ENCODE measurements at regions of chr11 and their contacts with region 1.

Region 1: GRCh38 chr11:102244681-102245409 is 72.4 kb upstream of the BIRC3 start:
- DNase-seq: no peak
- ATAC-seq: no peak
- H3K4me3 ChIP-seq: no peak overlapping the region
- H3K27ac ChIP-seq: no peak overlapping the region
- H3K4me1 ChIP-seq: no peaks in the 10 kb centered on the region
- H3K27me3 ChIP-seq: no peaks in the 10 kb centered on the region
- CTCF ChIP-seq: no peak

Region 2: DNA sequence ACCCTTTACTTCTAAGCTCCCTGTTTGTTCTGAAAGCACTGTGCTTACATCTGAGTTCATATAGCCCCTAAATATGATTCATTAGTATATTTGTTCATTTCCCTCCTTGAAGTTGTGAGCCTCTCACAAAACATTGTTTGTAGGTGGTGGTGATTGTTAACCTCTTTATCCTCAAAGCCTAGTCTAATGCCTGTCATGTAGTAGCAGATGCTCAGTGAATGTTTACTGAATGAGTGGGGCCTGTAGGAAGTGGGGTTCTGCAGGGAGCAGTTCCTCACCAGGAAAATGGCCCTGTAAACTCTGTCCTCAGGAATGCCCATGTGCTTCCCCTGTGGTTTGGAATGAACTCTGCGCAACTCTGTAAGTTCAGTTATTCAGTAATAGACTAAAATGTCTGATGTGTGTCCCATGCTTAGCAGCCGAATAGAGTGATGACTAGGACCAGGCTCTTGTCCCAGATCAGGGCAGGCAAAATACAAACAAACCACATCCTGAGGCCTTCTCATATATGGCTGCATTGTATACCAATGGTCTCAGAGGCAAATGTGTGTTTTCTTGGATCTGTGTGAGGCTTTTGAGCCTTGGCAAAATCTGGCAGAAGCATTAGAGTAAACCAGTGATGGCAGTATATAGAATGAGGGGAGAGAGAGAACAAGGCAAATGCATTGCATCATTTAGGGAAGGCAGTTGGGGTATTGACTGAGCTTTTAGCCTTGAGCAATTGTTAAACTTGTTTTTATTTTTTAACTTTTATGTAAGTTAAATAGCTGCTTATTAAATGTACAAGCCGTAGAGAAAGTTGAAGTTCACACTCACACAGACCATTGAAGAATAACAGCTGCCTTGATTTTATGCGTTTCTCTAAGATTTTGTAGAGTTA is 18.9 kb before region 1 on chr11:
- intact Hi-C with region 1: loop called in 1 of 2 experiments (anchors 1 kb)
- DNase-seq: no peak
- ATAC-seq: no peak
- H3K4me3 ChIP-seq: no peak overlapping the region
- H3K27ac ChIP-seq: no peak overlapping the region
- H3K4me1 ChIP-seq: no peaks in the 10 kb centered on the region
- H3K27me3 ChIP-seq: no peaks in the 10 kb centered on the region
- CTCF ChIP-seq: no peak

Measured in psoas muscle (tissue), 8 donors.